A673 (cell line): ENCODE measurements at regions of chr12 and their contacts with region 1.

Region 1: DNA sequence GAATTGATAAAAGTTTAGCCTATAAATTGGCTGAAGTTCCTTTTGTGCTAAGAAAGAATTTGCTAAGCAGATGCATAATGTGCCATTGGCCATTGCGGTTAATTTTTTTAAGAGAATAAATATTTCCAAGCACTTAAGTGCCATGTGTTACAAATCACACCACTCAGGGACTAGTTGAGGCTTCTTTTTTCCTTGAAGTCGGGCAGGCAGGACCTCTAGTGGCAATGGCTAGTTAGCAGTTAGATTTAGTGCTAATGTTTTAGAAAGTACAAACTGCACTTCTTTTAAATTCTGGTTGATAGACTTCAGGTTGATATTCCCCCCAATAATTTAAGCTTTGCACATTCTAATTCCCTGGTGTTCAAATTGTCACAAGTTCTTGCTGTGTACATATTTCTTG is 294.3 kb downstream of the APAF1 start:
- DNase-seq: peak; percentile 74
- H3K4me3 ChIP-seq: no peak overlapping the region
- H3K27ac ChIP-seq: no peak overlapping the region
- H3K4me1 ChIP-seq: no peaks in the 10 kb centered on the region
- H3K27me3 ChIP-seq: no peaks in the 10 kb centered on the region
- CTCF ChIP-seq: peak; percentile 79

Region 2: GRCh38 chr12:98698603-98699463 is 240.5 kb before region 1 on chr12:
- CTCF ChIA-PET with region 1: no interaction called
- POLR2A ChIA-PET with region 1: no interaction called
- intact Hi-C with region 1: loop called (anchors 1 kb)
- DNase-seq: peak; percentile 66
- H3K4me3 ChIP-seq: no peak overlapping the region
- H3K27ac ChIP-seq: no peak overlapping the region
- H3K4me1 ChIP-seq: peaks cover 4% of the 10 kb centered on the region
- H3K27me3 ChIP-seq: no peaks in the 10 kb centered on the region
- CTCF ChIP-seq: peak; percentile 75

Region 3: DNA sequence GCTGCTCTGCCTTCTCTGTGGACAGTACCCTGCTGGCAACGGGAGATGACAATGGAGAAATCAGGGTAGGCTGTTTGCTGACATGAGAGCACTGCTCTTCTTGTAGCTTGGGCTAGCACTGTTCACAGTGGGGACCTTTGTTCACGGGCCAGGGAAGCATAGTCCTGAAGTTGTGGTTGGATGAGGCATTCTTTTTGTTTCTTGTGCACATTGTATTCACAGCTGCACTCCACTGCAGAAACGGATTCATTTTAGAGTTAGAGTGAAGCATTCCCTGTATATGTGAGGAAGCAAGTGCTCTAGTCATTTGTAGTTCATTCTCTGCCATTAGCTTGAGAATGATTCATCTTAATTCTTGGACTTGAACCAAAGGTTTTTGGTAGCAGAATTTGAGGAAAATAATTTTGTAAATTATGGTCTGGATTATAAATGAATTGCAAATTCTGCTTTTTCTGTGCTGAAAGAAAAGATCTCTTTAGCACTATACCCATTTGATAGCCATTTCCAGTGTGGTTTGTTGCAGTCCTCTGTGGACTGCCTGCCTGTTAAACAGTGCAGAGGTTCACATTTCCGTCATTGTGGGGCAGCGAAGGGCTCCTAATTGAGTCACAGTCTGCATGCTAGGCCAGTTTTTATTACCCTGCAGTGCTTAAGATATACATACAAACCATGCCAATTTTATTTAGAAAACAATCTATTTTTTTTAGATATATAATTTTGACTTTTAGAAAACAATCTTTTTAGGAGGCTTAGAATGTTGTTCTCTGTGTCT is 213.7 kb before region 1 on chr12:
- CTCF ChIA-PET with region 1: no interaction called
- POLR2A ChIA-PET with region 1: no interaction called
- intact Hi-C with region 1: loop called (anchors 5 kb)
- DNase-seq: peak; percentile 61
- H3K4me3 ChIP-seq: no peak overlapping the region
- H3K27ac ChIP-seq: no peak overlapping the region
- H3K4me1 ChIP-seq: no peaks in the 10 kb centered on the region
- H3K27me3 ChIP-seq: no peaks in the 10 kb centered on the region
- CTCF ChIP-seq: peak; percentile 62

Region 4: GRCh38 chr12:98743347-98743953 is 195.9 kb before region 1 on chr12:
- CTCF ChIA-PET with region 1: no interaction called
- POLR2A ChIA-PET with region 1: no interaction called
- intact Hi-C with region 1: loop called (anchors 5 kb)
- DNase-seq: peak; percentile 67
- H3K4me3 ChIP-seq: no peak overlapping the region
- H3K27ac ChIP-seq: no peak overlapping the region
- H3K4me1 ChIP-seq: peaks cover 18% of the 10 kb centered on the region
- H3K27me3 ChIP-seq: no peaks in the 10 kb centered on the region
- CTCF ChIP-seq: peak; percentile 77

Region 5: DNA sequence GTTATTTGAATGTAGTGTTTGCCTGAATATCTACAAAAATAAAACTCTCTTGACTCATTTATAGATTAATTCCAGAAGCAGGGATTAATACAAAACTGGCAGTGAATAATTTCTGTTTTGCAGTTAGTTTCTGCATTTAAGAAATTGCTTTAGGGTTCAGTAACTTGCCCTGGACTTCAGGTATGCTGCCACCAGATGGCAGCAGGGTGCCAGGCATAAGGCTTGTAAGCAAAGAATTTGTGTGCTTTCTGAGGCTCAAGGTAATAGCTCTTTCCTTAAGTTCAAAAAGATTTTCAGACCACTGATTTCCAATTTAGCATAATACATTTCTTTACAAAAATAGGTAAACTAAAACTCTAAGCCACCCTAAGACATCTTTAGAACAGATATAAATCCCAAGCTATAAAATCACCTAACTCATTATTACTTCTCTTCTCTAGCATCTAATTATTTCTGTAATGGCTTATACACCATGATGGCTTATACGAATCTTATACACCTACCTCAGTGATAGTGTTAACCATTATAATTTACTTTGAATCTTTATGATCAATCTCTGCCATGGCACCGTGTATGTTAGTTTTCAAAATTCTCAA is 104.1 kb after region 1 on chr12:
- CTCF ChIA-PET with region 1: no interaction called
- POLR2A ChIA-PET with region 1: no interaction called
- intact Hi-C with region 1: no loop called
- DNase-seq: peak; percentile 76
- H3K4me3 ChIP-seq: no peak overlapping the region
- H3K27ac ChIP-seq: no peak overlapping the region
- H3K4me1 ChIP-seq: no peaks in the 10 kb centered on the region
- H3K27me3 ChIP-seq: no peaks in the 10 kb centered on the region
- CTCF ChIP-seq: peak; percentile 94